Activated CD4-positive, alpha-beta memory T cell treated with anti-CD3 and anti-CD28 coated beads, Interleukin-2, amount 10 ng/mL, durations not matched to agents 7 days and 5 days (primary cell): ENCODE measurements at regions of chr11 and their contacts with region 1.

Region 1: GRCh38 chr11:22875869-22876473 is 15.7 kb upstream of the CCDC179 start:
- DNase-seq: peak; percentile 61
- H3K4me3 Mint-ChIP-seq: no peak overlapping the region
- H3K27ac Mint-ChIP-seq: no peak overlapping the region
- H3K4me1 Mint-ChIP-seq: no peaks in the 10 kb centered on the region
- H3K27me3 Mint-ChIP-seq: no peaks in the 10 kb centered on the region

Region 2: DNA sequence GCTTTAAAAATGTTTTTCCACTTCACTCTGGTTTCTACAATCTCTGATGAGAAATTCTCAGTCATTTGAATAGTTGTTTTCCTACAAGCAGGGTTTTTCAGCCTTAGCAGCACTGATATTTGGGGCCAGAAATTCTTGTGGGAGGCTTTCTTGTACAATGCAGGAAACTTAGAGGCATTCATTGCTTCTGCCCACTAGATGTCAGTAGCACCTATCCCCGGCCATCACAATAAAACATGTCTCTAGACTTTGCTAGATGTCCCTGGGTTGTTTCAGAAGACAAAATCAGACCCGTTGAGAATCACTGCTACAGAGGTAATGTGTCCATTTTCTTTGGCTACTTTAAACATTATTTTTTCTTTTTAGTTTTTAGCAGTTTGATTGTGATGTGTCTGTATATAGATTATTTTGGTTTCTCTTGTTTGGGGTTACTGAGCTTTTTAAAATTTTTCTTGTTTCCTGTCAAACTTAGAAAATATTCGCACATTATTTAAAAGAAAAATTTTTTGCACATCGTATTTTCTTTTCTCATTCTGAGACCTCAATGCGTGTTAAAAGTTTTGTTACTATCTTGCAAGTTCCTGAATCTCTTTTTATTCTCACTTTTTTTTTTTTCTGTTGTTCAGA is 45.1 kb after region 1 on chr11:
- CTCF ChIA-PET with region 1: interaction called, 25 read pairs
- POLR2A ChIA-PET with region 1: no interaction called
- DNase-seq: peak; percentile 17
- H3K4me3 Mint-ChIP-seq: no peak overlapping the region
- H3K27ac Mint-ChIP-seq: no peak overlapping the region
- H3K4me1 Mint-ChIP-seq: peaks cover 4% of the 10 kb centered on the region
- H3K27me3 Mint-ChIP-seq: no peaks in the 10 kb centered on the region